ENCODE measurements at regions of chr1 and their contacts with region 1.

Region 1: DNA sequence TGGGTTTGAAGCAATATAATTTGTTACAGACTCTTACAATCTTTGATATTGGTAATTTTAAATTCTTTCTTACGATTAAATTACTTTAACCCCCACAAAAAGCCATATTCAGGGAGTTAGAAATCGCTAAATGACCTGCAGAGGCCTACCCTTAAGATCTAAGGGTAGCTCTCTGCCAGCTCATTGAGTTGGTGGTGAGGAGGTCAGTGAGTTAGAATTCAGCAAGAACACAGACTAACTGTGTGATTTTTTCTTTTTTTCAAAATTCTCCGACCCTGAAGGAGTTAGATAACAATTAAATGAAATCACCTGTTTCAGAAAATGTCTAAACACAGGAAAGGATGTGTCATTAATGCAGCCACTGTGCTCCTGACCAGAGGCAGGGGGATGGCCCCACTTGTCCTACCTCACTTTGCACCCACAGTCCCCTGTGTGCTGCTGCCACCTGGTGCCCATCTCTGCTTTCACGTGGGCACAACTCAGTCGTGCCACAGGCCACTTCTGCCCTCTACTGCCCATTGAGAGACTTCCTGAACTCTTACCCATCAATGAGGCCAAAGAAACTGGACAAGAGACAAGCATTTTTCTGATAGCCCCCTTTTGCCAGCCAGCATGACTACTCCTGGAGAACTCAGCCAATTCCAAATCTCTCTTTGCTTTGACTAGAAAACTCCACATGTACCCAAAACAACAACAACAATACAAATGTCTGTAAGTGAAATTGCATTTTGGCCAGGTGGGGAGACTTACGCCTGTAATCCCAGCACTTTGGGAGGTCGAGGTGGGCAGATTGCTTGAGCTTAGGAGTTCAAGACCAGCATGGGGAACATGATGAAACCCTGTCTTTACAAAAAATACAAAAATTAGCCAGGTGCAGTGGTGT is 8.4 kb downstream of the CFAP45 start:
- DNase-seq: peak; percentile 84
- ATAC-seq: peak; percentile 98
- H3K4me3 Mint-ChIP-seq: no peak overlapping the region
- H3K27ac Mint-ChIP-seq: no peak overlapping the region
- H3K4me1 Mint-ChIP-seq: peaks cover 21% of the 10 kb centered on the region
- H3K27me3 Mint-ChIP-seq: peaks cover 14% of the 10 kb centered on the region

Region 2: GRCh38 chr1:159780583-159781582 is 110.6 kb before region 1 on chr1 and contains the start of gene DUSP23:
- CTCF ChIA-PET with region 1: interaction called, 70 read pairs
- POLR2A ChIA-PET with region 1: no interaction called
- DNase-seq: peak; percentile 97
- ATAC-seq: peak; percentile 99
- H3K4me3 Mint-ChIP-seq: peak within 1 kb of the TSS; percentile 75
- H3K27ac Mint-ChIP-seq: peak within 1 kb of the TSS; percentile 56
- H3K4me1 Mint-ChIP-seq: peaks cover 35% of the 10 kb centered on the region
- H3K27me3 Mint-ChIP-seq: peaks cover 17% of the 10 kb centered on the region
- total RNA-seq, gene DUSP23: 21.9 to 26.5 TPM

Region 3: DNA sequence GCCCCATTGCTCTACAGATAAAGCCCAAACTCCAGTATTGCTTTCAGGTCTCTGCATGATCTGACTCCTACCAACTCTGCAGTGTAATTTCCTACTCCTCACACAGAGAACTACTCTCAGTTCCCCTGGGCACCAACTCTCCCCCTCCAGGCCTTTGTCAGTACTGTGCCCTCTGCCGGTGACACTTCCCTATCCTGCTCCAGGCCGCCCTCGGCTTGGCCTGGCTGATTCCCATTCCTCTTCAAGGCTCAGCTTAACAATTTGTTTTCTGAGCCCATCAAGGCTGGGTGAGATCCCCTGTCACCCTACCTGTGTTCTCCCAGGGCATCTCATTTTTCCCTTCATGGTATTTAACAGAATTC is 62.3 kb before region 1 on chr1:
- CTCF ChIA-PET with region 1: interaction called, 39 read pairs
- POLR2A ChIA-PET with region 1: no interaction called
- DNase-seq: no peak
- ATAC-seq: no peak
- H3K4me3 Mint-ChIP-seq: no peak overlapping the region
- H3K27ac Mint-ChIP-seq: no peak overlapping the region
- H3K4me1 Mint-ChIP-seq: peaks cover 50% of the 10 kb centered on the region
- H3K27me3 Mint-ChIP-seq: peaks cover 40% of the 10 kb centered on the region

Region 4: DNA sequence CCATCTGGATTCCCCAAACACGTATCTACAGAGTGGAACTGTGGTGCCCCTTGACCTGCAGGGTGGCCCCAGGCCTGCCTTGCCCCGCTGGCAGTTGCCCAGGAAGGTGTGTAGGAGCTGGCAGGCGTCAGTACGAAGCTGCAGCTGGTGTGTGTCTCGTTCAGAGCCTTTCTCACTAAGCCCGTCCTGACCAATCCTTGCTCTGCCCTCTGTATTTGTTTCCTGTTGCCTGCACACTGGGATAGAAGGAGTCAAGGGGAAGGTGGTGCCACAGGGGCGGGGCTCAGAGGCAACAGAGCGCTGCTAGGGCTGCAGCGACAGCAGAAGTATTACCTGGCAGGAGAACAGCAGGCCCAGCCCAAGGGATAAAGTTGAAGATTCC is 23.8 kb before region 1 on chr1:
- CTCF ChIA-PET with region 1: interaction called, 35 read pairs
- POLR2A ChIA-PET with region 1: no interaction called
- DNase-seq: no peak
- ATAC-seq: no peak
- H3K4me3 Mint-ChIP-seq: no peak overlapping the region
- H3K27ac Mint-ChIP-seq: no peak overlapping the region
- H3K4me1 Mint-ChIP-seq: peaks cover 28% of the 10 kb centered on the region
- H3K27me3 Mint-ChIP-seq: peaks cover 24% of the 10 kb centered on the region

Region 5: DNA sequence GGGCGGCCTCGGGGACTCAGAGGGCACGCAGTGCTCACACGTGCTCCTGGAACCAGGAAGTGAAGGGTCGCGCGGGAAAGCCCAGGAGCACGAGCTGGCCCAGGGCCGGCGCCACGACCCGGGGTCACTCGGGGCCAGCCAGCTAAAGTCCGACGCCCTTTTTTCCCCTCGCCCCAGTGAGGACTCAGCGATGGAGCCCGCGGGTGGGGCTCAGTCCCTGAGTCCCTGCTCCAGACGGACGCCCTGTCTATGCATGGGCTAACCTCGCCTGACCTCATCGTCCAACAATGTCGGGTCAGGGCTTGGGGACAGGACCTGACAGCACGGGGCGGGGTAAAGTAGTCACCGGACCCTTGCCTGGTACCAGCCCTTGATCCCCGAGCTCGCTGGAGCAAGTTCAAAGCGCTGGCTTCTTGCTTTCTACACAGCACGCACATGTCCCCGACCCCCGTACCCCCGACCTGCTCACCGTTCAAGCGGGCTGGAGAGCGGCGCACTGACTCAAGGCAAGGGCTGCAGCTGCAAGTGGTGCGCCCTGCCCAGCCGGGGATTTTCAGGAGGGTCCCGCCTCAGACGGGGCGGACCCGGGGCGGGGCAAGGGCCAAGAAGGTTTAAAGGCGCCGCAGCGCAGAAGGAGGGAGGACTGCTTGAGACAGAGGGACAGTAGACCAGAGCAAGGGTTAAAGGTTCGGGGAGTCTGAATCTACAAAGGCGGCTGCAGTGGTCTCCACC is 33.6 kb after region 1 on chr1 and contains the start of gene TAGLN2:
- CTCF ChIA-PET with region 1: interaction called, 49 read pairs
- POLR2A ChIA-PET with region 1: interaction called, 33 read pairs
- DNase-seq: peak; percentile 90
- ATAC-seq: peak; percentile 66
- H3K4me3 Mint-ChIP-seq: peak within 1 kb of the TSS; percentile 90
- H3K27ac Mint-ChIP-seq: peak within 1 kb of the TSS; percentile 96
- H3K4me1 Mint-ChIP-seq: peaks cover 43% of the 10 kb centered on the region
- H3K27me3 Mint-ChIP-seq: no peaks in the 10 kb centered on the region
- total RNA-seq, gene TAGLN2: 476 to 510 TPM

Region 6: GRCh38 chr1:159945483-159946241 is 54.1 kb after region 1 on chr1 and contains the start of gene IGSF9:
- CTCF ChIA-PET with region 1: interaction called, 15 read pairs
- POLR2A ChIA-PET with region 1: no interaction called
- DNase-seq: peak; percentile 78
- ATAC-seq: peak; percentile 93
- H3K4me3 Mint-ChIP-seq: peak within 1 kb of the TSS; percentile 36
- H3K27ac Mint-ChIP-seq: no peak within 1 kb of the TSS
- H3K4me1 Mint-ChIP-seq: peaks cover 9% of the 10 kb centered on the region
- H3K27me3 Mint-ChIP-seq: peaks cover 56% of the 10 kb centered on the region
- total RNA-seq, gene IGSF9: not detected

Measured in activated CD8-positive, alpha-beta T cell treated with anti-CD3 and anti-CD28 coated beads, Interleukin-2, amount 10 ng/mL, durations not matched to agents 7 days and 5 days (primary cell).